ENCODE measurements at regions of chr2 and their contacts with region 1.

Region 1: GRCh38 chr2:100730346-100730745 is 89.6 kb upstream of the NPAS2 start:
- DNase-seq: no peak
- ATAC-seq: no peak
- H3K4me3 ChIP-seq: no peak overlapping the region
- H3K27ac ChIP-seq: no peak overlapping the region
- H3K4me1 ChIP-seq: no peaks in the 10 kb centered on the region
- H3K27me3 ChIP-seq: 0 out of 4 replicates have a peak, but pooled peaks cover 0 to 2% of the 10 kb centered on the region in 2 experiments
- CTCF ChIP-seq: peak; percentile 28 to 40 (median 38); a peak in 5 of 6 replicates
- EP300 ChIP-seq: no peak
- POLR2A ChIP-seq: no peak
- RAD21 ChIP-seq: peak; percentile 50

Region 2: DNA sequence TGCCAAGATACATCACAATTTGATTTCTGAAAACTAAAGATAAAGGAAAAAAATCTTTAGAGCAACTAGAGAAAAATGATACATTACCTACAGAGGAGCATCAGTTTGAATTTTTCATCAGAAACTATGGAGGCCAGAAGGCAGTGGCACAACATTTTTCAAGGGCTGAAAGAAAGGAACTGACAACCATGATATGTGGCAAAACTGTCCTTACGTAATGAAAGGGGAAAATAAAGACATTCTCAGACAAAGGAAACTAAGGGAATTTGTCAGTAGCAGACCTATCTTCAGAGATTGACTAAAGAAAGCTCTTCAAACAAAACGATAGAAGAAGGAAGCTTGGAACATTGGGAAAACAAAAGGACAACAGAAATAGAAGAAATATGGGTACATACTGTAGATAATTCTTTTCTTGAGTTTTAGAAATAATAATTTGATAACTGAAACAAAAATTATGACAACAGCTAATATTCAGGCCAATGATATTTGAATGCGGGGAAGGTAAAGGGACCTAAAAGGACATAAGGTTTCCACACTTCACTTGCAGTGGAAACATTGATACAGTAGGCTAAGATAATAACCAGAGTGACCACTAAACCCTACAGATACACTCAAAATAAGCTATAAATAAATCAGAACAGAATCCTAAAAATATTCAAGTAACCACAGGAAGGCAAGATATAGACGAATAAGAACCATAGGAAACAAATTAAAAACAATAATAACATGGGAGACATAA is 19.6 kb after region 1 on chr2:
- CTCF ChIA-PET with region 1: no interaction called
- POLR2A ChIA-PET with region 1: no interaction called
- RAD21 ChIA-PET with region 1: no interaction called
- SMC1A ChIA-PET with region 1: no interaction called
- in situ Hi-C with region 1: no loop called
- intact Hi-C with region 1: loop called (anchors 2 kb)
- DNase-seq: no peak
- ATAC-seq: no peak
- H3K4me3 ChIP-seq: no peak overlapping the region
- H3K27ac ChIP-seq: no peak overlapping the region
- H3K4me1 ChIP-seq: no peaks in the 10 kb centered on the region
- H3K27me3 ChIP-seq: no peaks in the 10 kb centered on the region; a peak in 1 of 4 replicates
- CTCF ChIP-seq: no peak
- EP300 ChIP-seq: no peak
- POLR2A ChIP-seq: no peak
- RAD21 ChIP-seq: no peak

Measured in GM12878 (cell line).